ENCODE measurements at regions of chr18 and their contacts with region 1.

Region 1: DNA sequence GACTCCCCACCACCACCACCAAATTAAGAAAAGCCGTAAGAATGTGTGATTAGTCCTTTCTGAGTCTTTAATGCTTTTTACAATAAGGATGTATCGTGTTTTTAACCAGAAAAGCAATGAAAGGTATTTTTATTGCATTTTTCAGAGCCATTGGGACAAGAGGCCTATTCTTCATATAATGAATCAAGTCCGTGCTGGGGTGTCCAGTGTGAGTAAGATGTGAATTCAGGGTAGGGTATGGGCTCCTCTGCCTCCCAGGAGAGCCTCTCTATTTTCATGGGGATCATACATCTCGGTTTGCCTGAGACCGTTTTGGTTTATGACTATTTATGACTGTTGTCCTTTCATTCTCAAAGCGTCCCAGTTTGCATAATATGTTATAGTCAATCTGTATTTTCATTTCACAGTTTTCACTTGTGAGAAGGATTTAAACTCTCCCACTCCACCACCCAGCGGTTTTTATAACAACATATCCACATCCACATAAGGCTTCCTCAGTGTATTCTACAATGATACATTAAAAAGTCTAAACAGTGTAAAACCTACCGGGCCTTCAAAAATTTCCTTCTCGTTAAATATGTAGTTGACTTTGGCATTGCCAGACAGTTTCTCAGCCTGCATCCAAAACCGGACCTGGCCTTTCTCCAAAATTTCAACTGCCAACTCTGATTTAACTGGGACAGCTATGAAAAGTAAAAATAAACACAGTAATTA is 80.8 kb upstream of the LPIN2 start:
- DNase-seq: no peak
- H3K4me3 ChIP-seq: no peak overlapping the region
- H3K4me3 Mint-ChIP-seq: no peak overlapping the region
- H3K27ac Mint-ChIP-seq: no peak overlapping the region
- H3K4me1 ChIP-seq: no peaks in the 10 kb centered on the region
- H3K4me1 Mint-ChIP-seq: no peaks in the 10 kb centered on the region
- H3K27me3 ChIP-seq: no peaks in the 10 kb centered on the region
- H3K27me3 Mint-ChIP-seq: no peaks in the 10 kb centered on the region
- CTCF ChIP-seq: no peak

Region 2: GRCh38 chr18:3071676-3072075 is 22.1 kb before region 1 on chr18:
- CTCF ChIA-PET with region 1: interaction called, 3 read pairs
- POLR2A ChIA-PET with region 1: interaction called, 11 read pairs
- intact Hi-C with region 1: no loop called
- DNase-seq: no peak
- H3K4me3 ChIP-seq: no peak overlapping the region
- H3K4me3 Mint-ChIP-seq: no peak overlapping the region
- H3K27ac Mint-ChIP-seq: no peak overlapping the region
- H3K4me1 ChIP-seq: peaks cover 11% of the 10 kb centered on the region; the same call in 1 of the 2 replicates
- H3K4me1 Mint-ChIP-seq: no peaks in the 10 kb centered on the region
- H3K27me3 ChIP-seq: no peaks in the 10 kb centered on the region
- H3K27me3 Mint-ChIP-seq: no peaks in the 10 kb centered on the region
- CTCF ChIP-seq: no peak

Region 3: GRCh38 chr18:3179430-3180089 is 85.8 kb after region 1 on chr18:
- CTCF ChIA-PET with region 1: no interaction called
- POLR2A ChIA-PET with region 1: no interaction called
- intact Hi-C with region 1: no loop called
- DNase-seq: no peak
- H3K4me3 ChIP-seq: no peak overlapping the region
- H3K4me3 Mint-ChIP-seq: no peak overlapping the region
- H3K27ac Mint-ChIP-seq: no peak overlapping the region
- H3K4me1 ChIP-seq: no peaks in the 10 kb centered on the region
- H3K4me1 Mint-ChIP-seq: no peaks in the 10 kb centered on the region
- H3K27me3 ChIP-seq: no peaks in the 10 kb centered on the region
- H3K27me3 Mint-ChIP-seq: no peaks in the 10 kb centered on the region
- CTCF ChIP-seq: no peak

Measured in Caco-2 (cell line).